Head of caudate nucleus (tissue), 42 donors: ENCODE measurements at regions of chr7 and their contacts with region 1.

Region 1: GRCh38 chr7:92245487-92246362 is at the starts of genes ANKIB1 and KRIT1:
- DNase-seq: peak; percentile 87 to 97 (median 94)

Region 2: DNA sequence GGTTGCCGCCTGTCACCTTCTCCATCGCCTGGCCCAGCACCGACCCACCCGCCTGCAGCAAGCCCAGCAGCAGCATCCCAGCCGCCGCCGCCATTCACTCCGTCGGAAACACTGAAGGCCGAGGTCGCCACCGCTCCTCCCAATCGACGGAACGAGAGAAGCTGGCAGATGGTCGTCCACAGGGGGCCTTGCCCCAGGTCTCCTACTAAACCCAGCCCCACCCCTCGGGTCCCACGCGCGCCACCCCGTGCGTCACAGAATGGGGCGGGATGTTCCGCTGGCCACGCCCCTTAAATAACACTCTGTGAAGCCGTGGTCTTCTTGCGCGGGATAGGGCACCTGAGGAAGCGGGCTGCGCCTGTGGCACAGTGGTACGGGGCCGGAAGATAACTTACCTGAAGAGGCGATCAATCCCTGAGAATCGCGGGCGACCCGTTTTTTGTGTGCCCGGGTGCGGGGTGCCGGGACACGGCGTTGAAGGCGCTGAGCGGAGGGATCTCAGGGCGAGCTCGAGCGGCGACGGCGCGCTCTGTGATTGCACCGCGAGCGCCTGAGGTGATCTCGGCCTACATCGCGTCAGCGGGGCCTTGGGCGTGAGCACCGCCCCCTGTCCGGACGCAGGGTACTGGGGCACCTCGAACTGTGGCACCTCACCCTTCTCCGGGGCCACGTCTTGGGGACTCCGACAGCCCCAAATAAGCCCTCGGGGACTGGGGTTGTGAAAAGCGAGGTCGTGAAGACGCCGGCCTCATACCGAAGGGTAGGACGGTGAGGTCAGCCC is 111.3 kb before region 1 on chr7 and contains the start of gene CYP51A1:
- intact Hi-C with region 1: loop called (anchors 5 kb)
- DNase-seq: peak; percentile 90 to 97 (median 95)

Region 3: GRCh38 chr7:92292981-92293380 is 47.3 kb after region 1 on chr7:
- intact Hi-C with region 1: loop called (anchors 10 kb)
- DNase-seq: no peak

Region 4: GRCh38 chr7:92421676-92422435 is 176.1 kb after region 1 on chr7:
- intact Hi-C with region 1: loop called (anchors 10 kb)
- DNase-seq: no peak

Region 5: GRCh38 chr7:92496876-92497275 is 251.2 kb after region 1 on chr7:
- intact Hi-C with region 1: no loop called
- DNase-seq: no peak